H1 (cell line): ENCODE measurements at regions of chr9 and their contacts with region 1.

Region 1: DNA sequence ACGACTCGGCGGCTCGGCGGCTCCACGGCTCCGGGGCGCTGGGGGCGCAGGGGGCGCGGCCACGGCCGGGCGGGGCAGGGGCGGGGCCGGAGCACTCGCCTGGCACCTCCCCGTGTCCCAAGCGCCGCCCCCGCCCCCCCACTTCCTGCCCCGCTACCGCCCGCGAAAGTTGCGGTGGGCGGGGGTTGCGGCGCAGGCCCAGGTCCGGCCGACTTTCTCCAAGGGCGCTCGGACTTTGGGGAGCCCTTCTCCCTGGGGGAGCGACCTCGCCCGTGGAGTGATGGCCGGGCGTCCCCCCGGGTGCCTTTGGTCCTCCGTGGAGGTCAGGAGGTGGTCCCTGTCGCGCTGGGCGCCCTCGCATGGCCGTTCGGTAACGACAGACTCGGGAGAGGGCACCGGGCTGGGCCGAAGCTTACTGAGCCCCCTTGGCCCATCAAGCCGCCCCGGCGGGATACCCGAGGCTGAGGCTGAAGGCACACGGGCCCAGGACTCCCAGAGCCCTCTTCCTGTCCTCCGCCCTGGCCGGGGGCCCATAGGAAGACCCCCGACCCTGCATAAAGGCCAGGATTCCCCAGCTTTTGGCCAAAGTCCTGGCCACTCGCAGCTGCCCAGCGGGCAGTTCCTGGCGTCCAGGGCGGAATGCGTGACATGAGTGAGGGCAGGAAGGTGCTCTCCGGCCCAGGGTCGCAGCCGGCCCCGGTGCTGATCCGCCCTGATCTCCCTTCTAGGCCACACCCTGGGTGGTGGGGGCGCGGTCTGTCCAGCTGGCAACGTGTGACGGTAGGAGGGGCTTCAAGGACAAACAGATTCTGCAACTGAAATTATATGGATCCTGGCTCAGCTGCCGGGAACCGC is 883 bp upstream of the VAV2 start:
- DNase-seq: peak; percentile 39 to 84
- H3K4me3 ChIP-seq: peak overlapping the region; percentile 40 to 93 (median 67)
- H3K27ac ChIP-seq: peak overlapping the region; percentile 54; the same call in 1 of the 2 replicates
- H3K4me1 ChIP-seq: peaks cover 0 to 20% (median 11%) of the 10 kb centered on the region in 4 experiments; a peak in 5 of 7 replicates
- H3K27me3 ChIP-seq: no peaks in the 10 kb centered on the region
- CTCF ChIP-seq: peak in 2 of 3 experiments; percentile 12 to 22; a peak in 2 of 4 replicates
- EP300 ChIP-seq: no peak
- POLR2A ChIP-seq: no peak
- RAD21 ChIP-seq: 0 out of 4 replicates have a peak, but pooled peaks of 1 of the 2 experiments have one; percentile 10

Region 2: DNA sequence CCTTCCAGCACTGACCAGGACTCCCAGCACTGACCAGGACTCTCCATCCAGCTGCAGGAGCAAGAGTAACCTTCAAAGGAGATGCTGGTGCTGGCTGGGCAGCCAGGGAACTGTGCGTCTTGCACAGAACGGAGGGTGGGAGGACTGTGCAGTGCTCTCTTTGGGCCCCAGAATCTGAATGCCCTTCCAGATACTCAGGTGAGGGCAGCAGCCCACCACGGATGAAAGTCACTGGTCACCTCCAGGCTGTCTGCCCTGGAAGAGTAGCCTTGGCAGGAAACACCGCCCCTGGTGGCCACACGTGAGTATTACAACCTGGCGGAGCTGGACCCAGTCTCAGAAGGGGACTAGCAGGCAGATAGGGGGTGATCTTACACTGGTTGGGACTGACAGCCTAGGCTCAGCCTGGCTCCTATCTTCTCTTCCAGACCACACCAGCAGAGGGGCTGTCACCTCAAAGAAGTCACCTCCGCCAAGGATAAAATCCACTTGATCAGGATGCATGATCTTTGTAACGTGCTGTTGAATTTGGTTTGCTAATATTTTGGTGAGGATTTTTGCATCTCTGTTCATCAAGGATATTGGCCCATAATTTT is 250.1 kb before region 1 on chr9:
- CTCF ChIA-PET with region 1: interaction called, 20 read pairs
- POLR2A ChIA-PET with region 1: no interaction called
- DNase-seq: peak; percentile 84 to 99
- H3K4me3 ChIP-seq: no peak overlapping the region
- H3K27ac ChIP-seq: no peak overlapping the region
- H3K4me1 ChIP-seq: peaks cover 0 to 10% (median 5%) of the 10 kb centered on the region in 4 experiments; a peak in 6 of 7 replicates
- H3K27me3 ChIP-seq: no peaks in the 10 kb centered on the region
- CTCF ChIP-seq: peak in 2 of 3 experiments; percentile 99 to 100; a peak in 3 of 4 replicates
- EP300 ChIP-seq: no peak
- POLR2A ChIP-seq: no peak
- RAD21 ChIP-seq: peak; percentile 79 to 88

Region 3: DNA sequence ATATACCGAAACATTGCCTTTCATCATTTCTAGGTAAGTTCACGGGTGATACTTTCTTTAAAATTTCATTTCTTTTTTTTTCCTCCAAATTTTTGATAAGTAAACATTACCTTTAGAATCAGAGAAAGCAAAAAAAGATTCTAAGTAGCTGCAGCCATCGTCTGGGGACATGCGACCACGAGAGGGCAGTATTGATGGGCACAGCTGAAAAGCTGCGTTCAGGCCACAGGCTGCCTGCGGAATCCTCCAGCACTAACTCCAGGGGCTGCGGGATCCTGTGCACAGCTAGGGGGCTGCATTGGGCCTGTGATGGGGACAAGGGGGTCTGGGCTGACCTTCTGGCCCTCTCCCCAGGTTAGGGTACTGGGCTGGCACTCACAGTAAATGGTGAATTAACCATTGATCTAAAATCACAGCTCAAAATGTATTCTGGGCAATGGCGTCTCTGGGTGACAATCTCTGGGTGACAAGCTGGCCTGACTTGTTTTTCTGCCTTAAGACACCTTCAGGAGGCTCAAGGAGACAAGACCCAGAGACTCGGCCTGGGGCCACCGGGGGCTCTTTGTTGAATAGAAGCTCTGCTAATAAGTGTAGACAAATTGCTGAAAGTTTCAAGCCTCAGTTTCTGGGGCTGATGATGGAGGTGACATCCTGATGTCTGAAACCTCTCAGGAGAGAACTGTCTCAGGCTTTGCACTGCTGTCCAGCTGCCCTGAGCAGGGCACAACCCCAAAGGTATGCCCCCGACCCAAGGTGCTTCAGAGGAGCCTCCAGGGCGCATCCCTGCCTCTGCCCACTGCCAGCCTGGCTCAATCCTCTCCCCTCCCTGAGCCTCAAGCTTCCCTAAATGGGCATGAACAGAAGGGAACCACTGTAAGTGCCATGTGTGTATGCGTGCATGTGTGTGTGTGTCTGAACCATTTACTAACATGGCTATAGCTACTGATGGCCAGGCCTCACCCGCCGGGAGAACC is 210.6 kb before region 1 on chr9:
- CTCF ChIA-PET with region 1: interaction called, 75 read pairs
- POLR2A ChIA-PET with region 1: interaction called, 3 read pairs
- DNase-seq: peak in 1 of 2 experiments; percentile 84
- H3K4me3 ChIP-seq: no peak overlapping the region
- H3K27ac ChIP-seq: no peak overlapping the region
- H3K4me1 ChIP-seq: no peaks in the 10 kb centered on the region
- H3K27me3 ChIP-seq: no peaks in the 10 kb centered on the region
- CTCF ChIP-seq: peak in 2 of 3 experiments; percentile 89; a peak in 3 of 4 replicates
- EP300 ChIP-seq: no peak
- POLR2A ChIP-seq: no peak
- RAD21 ChIP-seq: peak; percentile 79 to 80

Region 4: DNA sequence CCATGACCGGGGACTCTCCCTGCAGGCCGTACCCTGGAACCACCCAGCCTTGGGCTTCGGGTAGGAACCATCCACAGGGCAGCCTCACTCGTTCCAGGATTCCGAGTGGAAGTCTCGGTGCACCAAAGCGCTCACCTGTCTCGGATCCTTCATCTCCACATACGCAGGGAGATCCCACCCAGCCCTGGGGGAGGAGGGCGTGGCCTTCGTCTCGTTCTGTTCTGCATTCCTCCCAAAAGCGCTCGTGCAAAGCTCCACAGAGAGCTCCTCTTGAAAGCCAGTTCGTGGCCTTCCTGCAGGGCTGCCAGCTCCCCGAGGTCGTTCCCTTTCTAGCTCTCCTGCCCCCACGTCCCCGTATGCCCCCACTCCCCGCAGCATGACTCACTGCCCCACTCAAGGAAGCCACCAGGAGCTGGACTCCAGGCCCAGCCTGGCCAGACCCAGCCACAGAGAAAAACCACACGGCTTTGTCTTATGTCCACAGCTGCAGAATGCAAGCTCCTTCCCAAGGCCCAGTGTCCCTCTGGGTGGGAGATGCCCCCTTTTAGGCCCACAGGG is 189.9 kb before region 1 on chr9:
- CTCF ChIA-PET with region 1: interaction called, 15 read pairs
- POLR2A ChIA-PET with region 1: no interaction called
- DNase-seq: no peak
- H3K4me3 ChIP-seq: no peak overlapping the region
- H3K27ac ChIP-seq: no peak overlapping the region
- H3K4me1 ChIP-seq: no peaks in the 10 kb centered on the region; a peak in 1 of 7 replicates
- H3K27me3 ChIP-seq: no peaks in the 10 kb centered on the region
- CTCF ChIP-seq: no peak
- EP300 ChIP-seq: no peak
- POLR2A ChIP-seq: no peak
- RAD21 ChIP-seq: no peak

Region 5: GRCh38 chr9:133862585-133863256 is 130.3 kb before region 1 on chr9:
- CTCF ChIA-PET with region 1: interaction called, 18 read pairs
- POLR2A ChIA-PET with region 1: no interaction called
- DNase-seq: no peak
- H3K4me3 ChIP-seq: no peak overlapping the region
- H3K27ac ChIP-seq: no peak overlapping the region
- H3K4me1 ChIP-seq: peaks cover 0 to 19% (median 6%) of the 10 kb centered on the region in 4 experiments; a peak in 4 of 7 replicates
- H3K27me3 ChIP-seq: no peaks in the 10 kb centered on the region
- CTCF ChIP-seq: no peak
- EP300 ChIP-seq: no peak
- POLR2A ChIP-seq: no peak
- RAD21 ChIP-seq: no peak

Region 6: GRCh38 chr9:133935328-133936040 is 57.5 kb before region 1 on chr9:
- CTCF ChIA-PET with region 1: interaction called, 15 read pairs
- POLR2A ChIA-PET with region 1: interaction called, 3 read pairs
- DNase-seq: no peak
- H3K4me3 ChIP-seq: no peak overlapping the region
- H3K27ac ChIP-seq: no peak overlapping the region
- H3K4me1 ChIP-seq: peaks cover 0 to 16% (median 8%) of the 10 kb centered on the region in 4 experiments; a peak in 5 of 7 replicates
- H3K27me3 ChIP-seq: no peaks in the 10 kb centered on the region
- CTCF ChIP-seq: no peak
- EP300 ChIP-seq: no peak
- POLR2A ChIP-seq: no peak
- RAD21 ChIP-seq: no peak

Region 7: DNA sequence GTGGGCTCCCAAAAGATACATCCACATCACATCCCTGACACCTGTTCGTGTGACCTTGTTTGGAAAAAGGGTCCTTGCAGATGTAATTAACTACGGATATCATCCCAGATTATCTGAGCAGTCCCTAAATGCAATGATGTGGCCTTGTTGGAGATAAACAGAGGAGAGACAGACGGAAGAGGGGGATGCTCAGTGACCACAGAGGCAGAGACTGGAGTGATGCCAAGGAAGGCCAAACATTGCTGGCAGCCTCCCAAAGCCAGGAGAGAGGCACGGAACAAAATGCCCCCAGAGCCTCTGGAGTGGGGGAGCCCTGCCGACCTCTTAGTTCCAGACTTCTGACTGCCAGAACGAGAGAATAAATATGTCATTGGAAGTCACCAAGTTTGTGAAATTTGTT is 14.1 kb after region 1 on chr9:
- CTCF ChIA-PET with region 1: interaction called, 36 read pairs
- POLR2A ChIA-PET with region 1: interaction called, 3 read pairs
- DNase-seq: no peak
- H3K4me3 ChIP-seq: no peak overlapping the region
- H3K27ac ChIP-seq: no peak overlapping the region
- H3K4me1 ChIP-seq: no peaks in the 10 kb centered on the region
- H3K27me3 ChIP-seq: peaks cover 0 to 2% (median 0%) of the 10 kb centered on the region in 4 experiments; a peak in 1 of 7 replicates
- CTCF ChIP-seq: no peak
- EP300 ChIP-seq: no peak
- POLR2A ChIP-seq: no peak
- RAD21 ChIP-seq: no peak